ENCODE measurements at regions of chr2 and their contacts with region 1.

Region 1: GRCh38 chr2:237744613-237745249 is 53.8 kb upstream of the RBM44 start:
- DNase-seq: peak; percentile 80
- ATAC-seq: peak; percentile 83 to 88

Region 2: DNA sequence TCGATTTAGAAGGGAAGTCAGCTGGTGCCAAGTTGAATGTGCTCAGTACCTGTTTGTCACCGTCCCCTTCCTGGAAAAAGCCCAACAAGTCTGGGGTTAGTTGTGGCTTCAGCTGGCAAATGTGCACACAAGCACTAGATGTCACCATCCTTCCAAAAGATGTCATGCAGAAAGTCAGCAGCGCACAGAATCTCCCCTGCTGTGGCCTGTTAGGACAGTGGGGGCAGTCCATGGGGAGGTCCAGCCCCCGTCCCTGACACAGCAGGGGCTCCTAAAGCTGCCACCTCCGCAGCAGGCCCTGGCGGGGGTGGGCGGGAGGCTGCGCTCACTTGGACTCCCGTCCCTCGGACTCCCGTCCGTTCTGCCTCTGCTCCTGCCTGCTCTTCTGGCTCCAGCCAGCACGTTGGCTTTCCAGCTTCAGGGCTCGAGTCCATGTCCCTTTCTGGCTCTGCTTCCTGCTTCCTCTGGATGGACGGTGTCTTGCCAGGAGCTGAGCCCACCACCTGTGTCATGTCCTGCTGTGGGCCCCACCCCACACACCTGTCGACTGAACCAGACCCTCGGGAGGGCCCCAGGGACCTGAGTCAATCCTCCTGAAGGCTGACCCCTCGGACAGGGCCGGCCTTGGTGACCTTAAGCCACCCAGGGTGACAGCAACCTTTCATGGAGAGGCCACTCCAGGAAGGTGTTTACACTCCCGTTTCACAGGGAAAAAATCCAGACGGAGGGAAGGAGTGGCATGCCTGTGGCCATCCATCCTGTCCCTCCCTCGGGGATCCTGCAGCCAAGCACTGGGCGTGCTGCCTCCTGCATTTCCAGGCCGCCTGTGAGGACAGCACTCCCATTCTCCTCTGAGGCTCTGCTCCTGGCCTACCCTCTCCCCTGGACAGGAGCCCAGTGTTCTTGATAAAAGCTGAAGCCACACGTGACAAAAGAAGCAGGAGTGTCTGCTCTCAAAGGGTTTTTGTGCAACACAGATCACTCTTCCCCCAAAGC is 162.7 kb before region 1 on chr2:
- intact Hi-C with region 1: loop called (anchors 2 to 5 kb)
- DNase-seq: peak; percentile 79
- ATAC-seq: peak; percentile 90 to 93

Region 3: GRCh38 chr2:237603718-237604362 is 140.9 kb before region 1 on chr2:
- intact Hi-C with region 1: loop called in 1 of 2 experiments (anchors 5 kb)
- DNase-seq: peak; percentile 45
- ATAC-seq: peak; percentile 54 to 57

Region 4: DNA sequence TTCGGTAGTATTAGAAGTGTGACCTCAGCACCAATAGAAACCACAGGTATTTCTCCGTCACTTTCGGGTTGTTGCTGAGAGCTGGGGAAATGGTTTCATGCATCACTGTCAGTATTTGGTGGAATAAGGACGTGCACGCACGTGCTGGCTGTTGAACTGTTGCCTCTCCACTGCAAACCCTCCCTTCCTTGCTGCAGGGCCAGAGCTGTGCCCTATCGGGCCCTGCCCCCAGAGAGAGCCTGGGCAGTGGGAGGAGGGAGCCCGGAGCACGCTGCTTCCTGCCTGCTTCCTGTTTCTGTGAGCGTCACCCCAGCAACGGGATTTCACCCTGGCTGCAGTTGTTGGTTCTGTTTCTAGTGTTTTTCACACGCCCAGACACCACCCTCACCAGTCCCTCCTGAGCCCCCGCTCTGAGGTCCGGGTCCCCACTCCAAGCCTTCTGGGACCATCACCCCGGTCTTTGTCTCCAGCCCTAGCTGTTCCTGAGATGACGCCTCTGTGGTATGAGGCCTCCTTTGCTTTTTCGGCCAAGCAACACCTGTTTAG is 69.9 kb before region 1 on chr2:
- intact Hi-C with region 1: loop called (anchors 2 to 5 kb)
- DNase-seq: peak; percentile 90
- ATAC-seq: peak; percentile 85

Measured in left cardiac atrium (tissue), 4 donors.